ENCODE measurements at regions of chr2 and their contacts with region 1.

Region 1: GRCh38 chr2:157349949-157350515 is 24.4 kb upstream of the ERMN start:
- DNase-seq: no peak
- ATAC-seq: no peak
- H3K4me3 ChIP-seq: no peak overlapping the region
- H3K4me3 Mint-ChIP-seq: no peak overlapping the region
- H3K27ac ChIP-seq: no peak overlapping the region
- H3K27ac Mint-ChIP-seq: no peak overlapping the region
- H3K4me1 ChIP-seq: no peaks in the 10 kb centered on the region
- H3K4me1 Mint-ChIP-seq: peaks cover 74% of the 10 kb centered on the region
- H3K27me3 ChIP-seq: no peaks in the 10 kb centered on the region
- H3K27me3 Mint-ChIP-seq: no peaks in the 10 kb centered on the region
- CTCF ChIP-seq: no peak

Region 2: DNA sequence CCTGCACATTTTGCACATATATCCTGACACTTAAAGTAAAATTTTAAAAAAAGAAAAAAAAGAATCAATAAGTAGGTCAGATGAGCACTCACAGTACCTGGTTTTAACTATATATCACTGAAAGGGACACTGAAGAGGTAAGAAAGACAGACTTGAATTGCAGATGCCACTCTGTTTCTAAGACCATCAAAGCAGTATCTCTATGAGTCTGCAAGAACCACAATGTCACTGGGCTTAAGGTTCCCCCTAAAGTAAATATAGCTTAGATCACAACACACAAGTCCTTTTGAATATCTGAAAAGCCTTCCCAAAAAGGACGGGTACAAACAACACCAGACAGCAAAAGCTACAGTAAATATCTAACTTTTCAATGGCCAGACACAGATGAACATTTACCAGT is 36.2 kb after region 1 on chr2:
- CTCF ChIA-PET with region 1: no interaction called
- POLR2A ChIA-PET with region 1: no interaction called
- intact Hi-C with region 1: loop called in 1 of 2 experiments (anchors 5 kb)
- DNase-seq: no peak
- ATAC-seq: no peak
- H3K4me3 ChIP-seq: no peak overlapping the region
- H3K4me3 Mint-ChIP-seq: peak overlapping the region; percentile 12
- H3K27ac ChIP-seq: no peak overlapping the region
- H3K27ac Mint-ChIP-seq: peak overlapping the region; percentile 24
- H3K4me1 ChIP-seq: no peaks in the 10 kb centered on the region
- H3K4me1 Mint-ChIP-seq: peaks cover 80% of the 10 kb centered on the region
- H3K27me3 ChIP-seq: no peaks in the 10 kb centered on the region
- H3K27me3 Mint-ChIP-seq: no peaks in the 10 kb centered on the region
- CTCF ChIP-seq: no peak